ENCODE measurements at regions of chr2 and their contacts with region 1.

Region 1: GRCh38 chr2:63819765-63820717 is 21.7 kb upstream of the UGP2 start:
- DNase-seq: no peak
- CTCF ChIP-seq: no peak

Region 2: DNA sequence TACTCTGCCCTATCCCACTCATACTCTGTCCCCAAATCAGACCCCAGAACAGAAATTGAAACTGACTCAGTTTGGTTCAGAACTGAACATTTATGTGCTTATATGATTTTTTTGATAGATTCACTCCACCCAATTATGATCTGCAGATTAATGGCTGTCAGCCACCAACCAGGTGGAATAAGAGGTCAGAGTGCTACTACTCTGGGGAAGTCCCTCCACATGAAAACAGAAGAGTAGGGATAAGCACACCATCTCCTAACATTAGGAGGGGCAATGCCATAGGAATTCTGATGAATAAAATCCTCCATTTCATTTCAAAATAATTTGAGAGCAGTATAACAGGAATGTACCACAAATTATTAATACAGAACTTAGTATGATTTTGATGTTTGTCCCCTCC is 14.6 kb before region 1 on chr2:
- CTCF ChIA-PET with region 1: no interaction called
- POLR2A ChIA-PET with region 1: no interaction called
- DNase-seq: no peak
- CTCF ChIP-seq: no peak

Region 3: DNA sequence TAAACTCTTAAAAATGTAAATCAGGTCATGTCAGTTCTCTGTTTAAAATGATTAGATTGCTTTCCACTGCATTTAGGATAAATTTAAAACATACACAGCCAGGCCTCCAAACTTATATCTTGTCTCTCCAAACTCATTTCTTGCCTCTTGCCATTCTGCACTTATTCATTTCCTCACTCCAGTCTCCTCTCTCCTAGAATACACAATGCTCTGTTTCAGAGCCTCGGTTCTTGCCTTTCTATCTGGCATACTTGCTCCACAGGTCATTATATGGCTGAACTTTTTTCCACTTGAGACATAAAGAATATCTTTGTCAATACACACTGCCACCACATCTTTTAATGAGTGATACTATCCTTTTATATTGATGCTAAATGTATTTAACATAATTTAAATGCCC is 11.1 kb after region 1 on chr2:
- CTCF ChIA-PET with region 1: interaction called, 10 read pairs
- POLR2A ChIA-PET with region 1: no interaction called
- DNase-seq: no peak
- CTCF ChIP-seq: no peak

Region 4: GRCh38 chr2:64018923-64019718 is 199.1 kb after region 1 on chr2 and contains the start of gene VPS54:
- CTCF ChIA-PET with region 1: no interaction called
- POLR2A ChIA-PET with region 1: no interaction called
- DNase-seq: peak; percentile 78
- CTCF ChIP-seq: no peak